ENCODE measurements at regions of chr14 and their contacts with region 1.

Region 1: GRCh38 chr14:29016050-29016900 is 249.7 kb downstream of the FOXG1 start:
- DNase-seq: peak; percentile 43 to 53
- H3K4me3 ChIP-seq: no peak overlapping the region
- H3K4me3 Mint-ChIP-seq: no peak overlapping the region
- H3K27ac Mint-ChIP-seq: no peak overlapping the region
- H3K4me1 ChIP-seq: no peaks in the 10 kb centered on the region
- H3K4me1 Mint-ChIP-seq: no peaks in the 10 kb centered on the region
- H3K27me3 ChIP-seq: no peaks in the 10 kb centered on the region
- H3K27me3 Mint-ChIP-seq: peaks cover under 1% of the 10 kb centered on the region
- CTCF ChIP-seq: peak; percentile 50 to 67

Region 2: GRCh38 chr14:28952666-28953065 is 63.6 kb before region 1 on chr14:
- CTCF ChIA-PET with region 1: no interaction called
- POLR2A ChIA-PET with region 1: no interaction called
- intact Hi-C with region 1: no loop called
- DNase-seq: no peak
- H3K4me3 ChIP-seq: no peak overlapping the region
- H3K4me3 Mint-ChIP-seq: no peak overlapping the region
- H3K27ac Mint-ChIP-seq: no peak overlapping the region
- H3K4me1 ChIP-seq: no peaks in the 10 kb centered on the region
- H3K4me1 Mint-ChIP-seq: no peaks in the 10 kb centered on the region
- H3K27me3 ChIP-seq: no peaks in the 10 kb centered on the region
- H3K27me3 Mint-ChIP-seq: peaks cover 6% of the 10 kb centered on the region
- CTCF ChIP-seq: no peak

Region 3: GRCh38 chr14:29222671-29223268 is 206.5 kb after region 1 on chr14:
- CTCF ChIA-PET with region 1: no interaction called
- POLR2A ChIA-PET with region 1: no interaction called
- intact Hi-C with region 1: loop called (anchors 1 kb)
- DNase-seq: peak; percentile 23 to 27
- H3K4me3 ChIP-seq: no peak overlapping the region
- H3K4me3 Mint-ChIP-seq: no peak overlapping the region
- H3K27ac Mint-ChIP-seq: no peak overlapping the region
- H3K4me1 ChIP-seq: no peaks in the 10 kb centered on the region
- H3K4me1 Mint-ChIP-seq: no peaks in the 10 kb centered on the region
- H3K27me3 ChIP-seq: no peaks in the 10 kb centered on the region
- H3K27me3 Mint-ChIP-seq: peaks cover 5% of the 10 kb centered on the region
- CTCF ChIP-seq: peak; percentile 36 to 62

Region 4: GRCh38 chr14:29536886-29537511 is 520.7 kb after region 1 on chr14:
- CTCF ChIA-PET with region 1: no interaction called
- POLR2A ChIA-PET with region 1: no interaction called
- intact Hi-C with region 1: loop called (anchors 2 kb)
- DNase-seq: no peak
- H3K4me3 ChIP-seq: no peak overlapping the region
- H3K4me3 Mint-ChIP-seq: no peak overlapping the region
- H3K27ac Mint-ChIP-seq: no peak overlapping the region
- H3K4me1 ChIP-seq: no peaks in the 10 kb centered on the region
- H3K4me1 Mint-ChIP-seq: no peaks in the 10 kb centered on the region
- H3K27me3 ChIP-seq: no peaks in the 10 kb centered on the region; the same call in 1 of the 2 replicates
- H3K27me3 Mint-ChIP-seq: peaks cover 5% of the 10 kb centered on the region
- CTCF ChIP-seq: peak; percentile 23 to 24

Region 5: GRCh38 chr14:30214461-30215090 is 1198.3 kb after region 1 on chr14:
- CTCF ChIA-PET with region 1: no interaction called
- POLR2A ChIA-PET with region 1: no interaction called
- intact Hi-C with region 1: loop called (anchors 10 kb)
- DNase-seq: peak in 1 of 2 experiments; percentile 32
- H3K4me3 ChIP-seq: no peak overlapping the region
- H3K4me3 Mint-ChIP-seq: no peak overlapping the region
- H3K27ac Mint-ChIP-seq: no peak overlapping the region
- H3K4me1 ChIP-seq: no peaks in the 10 kb centered on the region
- H3K4me1 Mint-ChIP-seq: no peaks in the 10 kb centered on the region
- H3K27me3 ChIP-seq: no peaks in the 10 kb centered on the region
- H3K27me3 Mint-ChIP-seq: peaks cover under 1% of the 10 kb centered on the region
- CTCF ChIP-seq: peak; percentile 32 to 63

Measured in Caco-2 (cell line).